Activated CD8-positive, alpha-beta memory T cell treated with anti-CD3 and anti-CD28 coated beads, Interleukin-2, amount 10 ng/mL, durations not matched to agents 7 days and 5 days (primary cell): ENCODE measurements at regions of chr14 and their contacts with region 1.

Region 1: DNA sequence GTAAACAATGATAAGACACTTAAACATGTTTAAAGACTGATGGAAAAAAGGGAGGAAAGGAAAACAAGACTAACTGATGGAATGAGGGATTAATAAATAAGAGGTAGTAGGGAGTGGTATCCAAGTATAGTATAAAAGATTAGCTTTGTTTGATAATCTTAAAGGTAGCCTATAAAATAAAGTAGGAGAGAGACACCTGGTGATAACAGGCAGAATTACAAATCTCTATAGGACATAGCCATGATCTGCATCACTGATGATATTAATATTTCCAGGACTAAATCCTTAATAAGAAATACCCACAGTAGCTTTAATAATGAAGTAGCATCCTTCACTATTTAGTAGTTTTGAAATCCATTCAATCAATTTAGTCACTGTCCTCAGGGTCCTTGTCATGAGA is 30.4 kb downstream of the DLGAP5 start:
- DNase-seq: no peak
- ATAC-seq: peak; percentile 45
- H3K4me3 Mint-ChIP-seq: no peak overlapping the region
- H3K27ac Mint-ChIP-seq: no peak overlapping the region
- H3K4me1 Mint-ChIP-seq: peaks cover 19% of the 10 kb centered on the region
- H3K27me3 Mint-ChIP-seq: no peaks in the 10 kb centered on the region

Region 2: GRCh38 chr14:55094321-55095157 is 66.5 kb before region 1 on chr14:
- CTCF ChIA-PET with region 1: interaction called, 54 read pairs
- DNase-seq: no peak
- ATAC-seq: no peak
- H3K4me3 Mint-ChIP-seq: no peak overlapping the region
- H3K27ac Mint-ChIP-seq: no peak overlapping the region
- H3K4me1 Mint-ChIP-seq: peaks cover 62% of the 10 kb centered on the region
- H3K27me3 Mint-ChIP-seq: no peaks in the 10 kb centered on the region

Region 3: DNA sequence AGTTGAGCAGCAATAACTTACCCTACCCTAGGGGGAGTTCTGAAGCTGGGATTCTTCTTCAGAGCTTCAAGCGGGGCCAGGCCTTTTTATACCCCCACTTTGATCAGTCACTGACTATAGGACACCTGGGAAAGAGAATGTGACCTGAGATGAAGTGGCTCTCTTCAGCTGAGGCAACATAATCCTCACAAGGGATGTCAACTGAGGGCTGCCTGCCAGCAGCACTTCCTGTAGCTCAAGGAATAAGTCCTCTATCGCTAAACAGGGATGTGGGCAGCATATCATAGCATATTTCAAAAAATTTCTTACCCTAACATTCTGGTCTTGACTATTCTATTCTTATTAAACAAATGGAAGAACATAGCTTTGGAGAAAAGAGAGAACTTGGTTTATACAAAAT is 14.6 kb before region 1 on chr14:
- CTCF ChIA-PET with region 1: interaction called, 15 read pairs
- DNase-seq: no peak
- ATAC-seq: no peak
- H3K4me3 Mint-ChIP-seq: no peak overlapping the region
- H3K27ac Mint-ChIP-seq: no peak overlapping the region
- H3K4me1 Mint-ChIP-seq: peaks cover 44% of the 10 kb centered on the region
- H3K27me3 Mint-ChIP-seq: no peaks in the 10 kb centered on the region